ENCODE measurements at regions of chr3 and their contacts with region 1.

Region 1: DNA sequence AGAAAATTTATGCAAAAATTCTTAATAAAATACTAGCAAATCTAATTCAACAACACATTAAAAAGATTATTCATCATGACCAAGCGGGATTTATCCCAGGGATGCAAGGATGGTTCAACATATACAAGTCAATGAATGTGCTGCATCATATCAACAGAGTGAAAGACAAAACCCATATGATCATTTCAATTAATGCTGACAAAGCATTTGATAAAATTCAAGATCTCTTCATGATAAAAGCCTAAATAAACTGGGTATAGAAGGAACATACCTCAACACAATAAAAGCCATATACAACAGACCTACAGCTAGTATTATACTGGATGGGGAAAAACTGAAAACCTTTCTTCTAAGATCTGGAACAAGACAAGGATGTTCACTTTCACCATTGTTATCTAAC is 89.7 kb downstream of the KBTBD8 start:
- DNase-seq: no peak
- ATAC-seq: no peak
- H3K4me3 ChIP-seq: no peak overlapping the region
- H3K27ac ChIP-seq: no peak overlapping the region
- H3K4me1 ChIP-seq: peaks cover 0 to 4% (median 0%) of the 10 kb centered on the region in 12 donors
- H3K27me3 ChIP-seq: no peaks in the 10 kb centered on the region
- CTCF ChIP-seq: no peak
- POLR2A ChIP-seq: no peak

Region 2: GRCh38 chr3:66989860-66990665 is 97.7 kb before region 1 on chr3:
- intact Hi-C with region 1: no loop called
- DNase-seq: no peak
- ATAC-seq: no peak
- H3K4me3 ChIP-seq: peak overlapping the region in 1 of 12 donors; percentile 23
- H3K27ac ChIP-seq: no peak overlapping the region
- H3K4me1 ChIP-seq: no peaks in the 10 kb centered on the region
- H3K27me3 ChIP-seq: peaks cover 0 to 18% (median 0%) of the 10 kb centered on the region in 9 donors
- CTCF ChIP-seq: peak in 10 of 12 donors; percentile 18 to 50 (median 34)
- POLR2A ChIP-seq: no peak

Region 3: DNA sequence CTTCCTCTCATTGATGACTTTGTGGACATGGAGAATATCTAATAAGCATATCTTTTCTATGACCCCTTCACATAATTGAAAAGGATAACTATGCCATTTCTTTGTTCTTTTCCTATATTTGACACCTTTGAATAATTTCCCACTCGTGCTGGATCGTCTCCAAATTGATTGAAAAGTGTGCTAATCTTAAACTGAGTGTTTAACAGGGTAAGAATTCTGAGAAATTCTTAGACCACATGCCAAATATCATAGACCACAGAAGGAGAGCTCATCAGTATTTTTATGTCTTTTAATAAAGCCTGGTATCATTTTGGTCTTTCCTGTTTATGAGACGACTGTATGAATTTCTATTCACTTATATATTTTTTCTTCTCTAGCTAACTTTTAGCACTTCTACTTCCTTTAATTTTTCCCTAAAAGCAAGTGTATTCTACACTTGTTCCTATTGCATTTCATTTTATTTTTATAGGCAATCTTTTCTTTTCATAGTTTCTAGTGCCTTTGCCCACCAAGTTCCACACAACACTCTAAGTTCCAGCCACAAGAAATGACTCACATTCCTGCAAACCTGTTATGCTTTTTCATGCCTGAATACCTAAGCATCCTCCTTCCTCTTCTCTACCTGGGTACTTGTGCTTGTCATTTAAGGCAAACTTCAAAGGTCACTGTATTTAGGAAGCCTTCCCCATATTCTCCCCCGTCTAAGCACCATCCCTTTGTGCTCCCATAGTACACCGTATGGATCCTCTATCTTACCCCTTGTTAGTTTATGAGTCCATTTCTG is 59.6 kb before region 1 on chr3:
- intact Hi-C with region 1: loop called in 1 of 10 experiments (anchors 5 kb)
- DNase-seq: no peak
- ATAC-seq: no peak
- H3K4me3 ChIP-seq: no peak overlapping the region
- H3K27ac ChIP-seq: no peak overlapping the region
- H3K4me1 ChIP-seq: peaks cover 0 to 8% (median 0%) of the 10 kb centered on the region in 12 donors
- H3K27me3 ChIP-seq: no peaks in the 10 kb centered on the region
- CTCF ChIP-seq: no peak
- POLR2A ChIP-seq: no peak

Region 4: DNA sequence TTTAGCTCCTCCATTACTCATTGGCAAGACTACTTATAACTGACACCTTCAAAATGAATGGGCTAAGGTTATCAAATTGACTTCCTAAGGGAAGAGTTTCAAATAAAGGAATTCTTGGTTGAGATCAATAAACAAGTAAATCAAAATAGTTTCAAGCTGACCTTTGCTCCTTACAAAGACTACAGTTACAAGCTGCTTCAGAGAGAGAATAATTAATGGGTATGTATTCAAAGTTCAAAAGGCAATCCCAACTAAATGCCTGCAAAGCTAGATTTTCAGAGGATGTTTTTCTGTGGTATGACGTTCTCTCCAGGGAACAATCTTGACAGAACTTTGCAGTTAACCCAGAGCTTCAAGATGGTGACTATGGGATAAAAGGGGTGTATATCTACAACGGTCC is 412.9 kb after region 1 on chr3:
- intact Hi-C with region 1: no loop called
- DNase-seq: no peak
- ATAC-seq: no peak
- H3K4me3 ChIP-seq: no peak overlapping the region
- H3K27ac ChIP-seq: no peak overlapping the region
- H3K4me1 ChIP-seq: peaks cover 0 to under 1% (median 0%) of the 10 kb centered on the region in 12 donors
- H3K27me3 ChIP-seq: no peaks in the 10 kb centered on the region
- CTCF ChIP-seq: no peak
- POLR2A ChIP-seq: no peak

Measured in heart left ventricle (tissue), 16 donors.